Caco-2 (cell line): ENCODE measurements at regions of chr21 and their contacts with region 1.

Region 1: GRCh38 chr21:31457675-31458074 is 113.6 kb upstream of the TIAM1 start:
- DNase-seq: peak in 1 of 2 experiments; percentile 12
- H3K4me3 ChIP-seq: no peak overlapping the region
- H3K4me3 Mint-ChIP-seq: no peak overlapping the region
- H3K27ac Mint-ChIP-seq: no peak overlapping the region
- H3K4me1 ChIP-seq: no peaks in the 10 kb centered on the region
- H3K4me1 Mint-ChIP-seq: no peaks in the 10 kb centered on the region
- H3K27me3 ChIP-seq: no peaks in the 10 kb centered on the region
- H3K27me3 Mint-ChIP-seq: no peaks in the 10 kb centered on the region
- CTCF ChIP-seq: peak; percentile 17 to 42

Region 2: GRCh38 chr21:31370893-31371544 is 86.7 kb before region 1 on chr21:
- CTCF ChIA-PET with region 1: no interaction called
- POLR2A ChIA-PET with region 1: no interaction called
- intact Hi-C with region 1: loop called (anchors 10 kb)
- DNase-seq: no peak
- H3K4me3 ChIP-seq: no peak overlapping the region
- H3K4me3 Mint-ChIP-seq: no peak overlapping the region
- H3K27ac Mint-ChIP-seq: no peak overlapping the region
- H3K4me1 ChIP-seq: no peaks in the 10 kb centered on the region
- H3K4me1 Mint-ChIP-seq: no peaks in the 10 kb centered on the region
- H3K27me3 ChIP-seq: no peaks in the 10 kb centered on the region
- H3K27me3 Mint-ChIP-seq: no peaks in the 10 kb centered on the region
- CTCF ChIP-seq: no peak

Region 3: GRCh38 chr21:31476263-31477022 is 18.8 kb after region 1 on chr21:
- CTCF ChIA-PET with region 1: no interaction called
- POLR2A ChIA-PET with region 1: no interaction called
- intact Hi-C with region 1: no loop called
- DNase-seq: no peak
- H3K4me3 ChIP-seq: no peak overlapping the region
- H3K4me3 Mint-ChIP-seq: no peak overlapping the region
- H3K27ac Mint-ChIP-seq: no peak overlapping the region
- H3K4me1 ChIP-seq: no peaks in the 10 kb centered on the region
- H3K4me1 Mint-ChIP-seq: no peaks in the 10 kb centered on the region
- H3K27me3 ChIP-seq: no peaks in the 10 kb centered on the region
- H3K27me3 Mint-ChIP-seq: no peaks in the 10 kb centered on the region
- CTCF ChIP-seq: no peak